ENCODE measurements at regions of chr15 and their contacts with region 1.

Region 1: GRCh38 chr15:59372352-59373211 is at the start of gene MYO1E:
- DNase-seq: peak; percentile 96
- ATAC-seq: peak; percentile 87
- H3K4me3 ChIP-seq: peak within 1 kb of the TSS; percentile 89
- H3K27ac ChIP-seq: peak within 1 kb of the TSS; percentile 53
- H3K4me1 ChIP-seq: peaks cover 33% of the 10 kb centered on the region
- H3K27me3 ChIP-seq: no peaks in the 10 kb centered on the region
- CTCF ChIP-seq: no peak
- total RNA-seq, gene MYO1E: 67.7 and 68.8 TPM in 2 replicates

Region 2: GRCh38 chr15:59074607-59075006 is 298.0 kb before region 1 on chr15:
- CTCF ChIA-PET with region 1: no interaction called
- POLR2A ChIA-PET with region 1: no interaction called
- intact Hi-C with region 1: no loop called
- DNase-seq: no peak
- ATAC-seq: no peak
- H3K4me3 ChIP-seq: no peak overlapping the region
- H3K27ac ChIP-seq: no peak overlapping the region
- H3K4me1 ChIP-seq: no peaks in the 10 kb centered on the region
- H3K27me3 ChIP-seq: no peaks in the 10 kb centered on the region
- CTCF ChIP-seq: no peak

Region 3: GRCh38 chr15:59174835-59175831 is 197.4 kb before region 1 on chr15:
- CTCF ChIA-PET with region 1: no interaction called
- POLR2A ChIA-PET with region 1: interaction called, 25 read pairs
- intact Hi-C with region 1: loop called (anchors 10 kb)
- DNase-seq: peak; percentile 71
- ATAC-seq: peak; percentile 42
- H3K4me3 ChIP-seq: peak overlapping the region; percentile 2; the same call in 1 of the 2 replicates
- H3K27ac ChIP-seq: peak overlapping the region; percentile 84
- H3K4me1 ChIP-seq: peaks cover 47% of the 10 kb centered on the region
- H3K27me3 ChIP-seq: no peaks in the 10 kb centered on the region
- CTCF ChIP-seq: peak; percentile 66

Region 4: GRCh38 chr15:59276225-59277178 is 96.1 kb before region 1 on chr15:
- CTCF ChIA-PET with region 1: no interaction called
- POLR2A ChIA-PET with region 1: interaction called, 3 read pairs
- intact Hi-C with region 1: loop called (anchors 2 kb)
- DNase-seq: peak; percentile 94
- ATAC-seq: peak; percentile 87
- H3K4me3 ChIP-seq: peak overlapping the region; percentile 28; the same call in 1 of the 2 replicates
- H3K27ac ChIP-seq: peak overlapping the region; percentile 97
- H3K4me1 ChIP-seq: peaks cover 81% of the 10 kb centered on the region
- H3K27me3 ChIP-seq: no peaks in the 10 kb centered on the region
- CTCF ChIP-seq: no peak

Region 5: DNA sequence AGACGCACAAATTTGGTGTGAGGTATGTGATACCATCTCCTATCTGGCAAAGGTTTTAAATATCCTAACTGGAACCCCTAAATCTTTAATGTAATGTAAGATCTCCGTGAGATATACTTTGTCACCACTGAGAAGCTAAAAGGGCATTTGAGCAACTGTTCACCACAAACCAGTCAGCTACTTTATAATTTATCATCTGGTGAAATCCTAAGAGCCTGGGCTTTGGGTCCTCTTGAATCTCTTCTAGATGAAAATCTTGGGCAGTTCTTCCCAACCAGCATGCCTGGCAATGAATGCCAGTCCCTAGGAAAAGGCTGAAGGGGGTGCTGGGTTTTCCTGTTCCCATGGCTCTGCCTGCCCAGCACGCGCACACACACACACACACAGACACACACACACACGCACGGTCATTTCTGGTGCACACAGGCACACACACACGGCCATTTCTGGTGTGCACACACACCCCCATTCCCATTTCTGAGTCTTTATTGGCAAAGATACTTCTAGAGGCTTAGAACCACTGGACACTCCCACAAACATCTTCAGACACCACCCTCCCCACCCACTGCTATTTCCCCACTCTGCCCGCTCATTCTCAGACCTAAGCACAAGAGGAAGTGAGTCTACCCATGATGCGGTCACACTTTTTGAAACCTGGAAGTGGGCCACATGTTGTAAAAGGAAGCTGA is 72.5 kb before region 1 on chr15:
- CTCF ChIA-PET with region 1: no interaction called
- POLR2A ChIA-PET with region 1: interaction called, 11 read pairs
- intact Hi-C with region 1: loop called (anchors 5 kb)
- DNase-seq: peak; percentile 96
- ATAC-seq: peak; percentile 82
- H3K4me3 ChIP-seq: peak overlapping the region; percentile 41; the same call in 1 of the 2 replicates
- H3K27ac ChIP-seq: peak overlapping the region; percentile 89
- H3K4me1 ChIP-seq: peaks cover 75% of the 10 kb centered on the region
- H3K27me3 ChIP-seq: no peaks in the 10 kb centered on the region
- CTCF ChIP-seq: no peak

Measured in PC-3 (cell line).